Posterior vena cava (tissue), 2 donors: ENCODE measurements at regions of chr1 and their contacts with region 1.

Region 1: GRCh38 chr1:232267092-232267836 is 362.7 kb downstream of the SIPA1L2 start:
- DNase-seq: no peak

Region 2: DNA sequence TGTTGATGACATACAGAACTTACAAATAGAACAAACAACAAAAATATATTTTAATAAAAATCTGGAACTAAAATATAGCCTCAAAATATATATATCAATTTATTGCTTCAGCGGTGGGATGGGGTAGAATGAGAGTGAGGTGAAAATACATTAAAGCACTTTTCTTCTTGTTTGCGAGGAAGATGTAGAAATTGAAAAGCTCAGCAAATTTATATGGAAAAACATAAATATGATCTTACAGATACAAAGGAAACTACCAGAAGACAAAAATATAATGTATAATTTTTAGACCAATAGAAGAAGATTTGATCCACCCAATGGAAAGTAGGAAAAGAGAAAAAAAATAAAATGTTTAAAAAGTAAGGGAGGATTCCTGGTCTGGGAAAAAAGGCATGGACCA is 268.5 kb before region 1 on chr1:
- intact Hi-C with region 1: no loop called
- DNase-seq: no peak

Region 3: GRCh38 chr1:232244426-232244825 is 22.8 kb before region 1 on chr1:
- intact Hi-C with region 1: loop called in 1 of 2 experiments (anchors 1 kb)
- DNase-seq: no peak

Region 4: GRCh38 chr1:232305050-232305449 is 37.8 kb after region 1 on chr1:
- intact Hi-C with region 1: no loop called
- DNase-seq: no peak

Region 5: GRCh38 chr1:232501854-232502253 is 234.6 kb after region 1 on chr1:
- intact Hi-C with region 1: no loop called
- DNase-seq: no peak

Region 6: DNA sequence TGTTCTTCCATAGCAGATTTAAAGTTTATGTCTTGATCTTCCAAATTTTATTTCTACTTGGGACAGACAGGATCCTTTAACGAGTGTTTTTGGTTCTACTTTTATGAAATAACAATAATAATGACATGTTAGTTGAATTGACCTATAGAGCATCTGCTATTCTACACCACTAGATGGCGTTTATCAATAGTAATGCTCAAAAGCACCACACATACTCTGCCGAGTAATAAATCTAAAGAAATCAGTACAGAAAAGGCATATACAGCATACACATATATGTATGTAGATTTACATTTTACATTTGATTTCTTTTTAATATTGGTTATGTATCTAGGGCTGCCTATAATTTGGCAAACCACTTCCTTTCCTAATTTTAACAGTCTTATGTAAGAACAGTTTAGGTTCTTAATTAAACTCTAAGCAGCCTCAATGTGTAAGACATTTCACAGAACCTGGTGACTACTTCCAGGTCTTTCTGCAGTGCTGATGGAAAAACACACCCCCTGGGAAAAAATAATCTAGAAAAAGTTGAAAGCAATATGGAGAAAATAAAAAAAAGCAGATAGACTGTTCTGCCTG is 368.6 kb after region 1 on chr1:
- intact Hi-C with region 1: no loop called
- DNase-seq: no peak